ENCODE measurements at regions of chr7 and their contacts with region 1.

Region 1: DNA sequence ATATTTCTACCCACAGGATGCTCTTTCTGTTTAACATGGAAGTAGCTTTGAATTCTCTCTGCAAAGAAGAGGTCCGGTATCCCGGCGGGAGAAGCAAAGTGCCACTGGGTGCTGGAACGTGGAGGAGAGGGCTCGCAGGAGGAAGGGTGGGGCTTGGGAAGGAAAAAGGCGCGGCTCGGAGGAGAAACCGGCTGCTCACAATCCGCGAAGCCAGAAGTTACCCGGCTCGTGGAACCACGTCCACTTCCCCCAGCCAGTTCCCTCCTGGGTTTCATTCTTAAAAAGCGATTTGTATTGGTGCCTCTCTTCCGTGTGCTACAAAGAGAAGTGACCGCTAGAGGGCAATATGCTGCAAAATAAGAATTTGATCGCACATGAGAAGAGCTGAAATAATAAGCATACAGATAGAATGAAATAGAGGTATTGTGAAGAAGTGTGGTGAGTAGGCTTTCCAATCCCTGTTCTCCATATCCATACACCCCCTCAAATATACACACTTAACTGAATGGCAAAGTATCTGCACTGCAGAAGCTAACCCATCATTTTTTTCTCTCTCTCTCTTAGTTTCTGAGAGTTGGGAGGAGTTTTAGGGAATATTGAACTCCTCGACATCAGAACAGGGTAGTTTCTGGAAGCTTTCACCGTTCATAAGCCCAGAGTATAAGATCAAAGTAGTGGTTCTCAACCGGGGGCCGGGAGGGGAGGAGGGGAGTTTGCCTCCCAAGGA is 31.1 kb downstream of the TRIL start:
- DNase-seq: peak; percentile 73

Region 2: DNA sequence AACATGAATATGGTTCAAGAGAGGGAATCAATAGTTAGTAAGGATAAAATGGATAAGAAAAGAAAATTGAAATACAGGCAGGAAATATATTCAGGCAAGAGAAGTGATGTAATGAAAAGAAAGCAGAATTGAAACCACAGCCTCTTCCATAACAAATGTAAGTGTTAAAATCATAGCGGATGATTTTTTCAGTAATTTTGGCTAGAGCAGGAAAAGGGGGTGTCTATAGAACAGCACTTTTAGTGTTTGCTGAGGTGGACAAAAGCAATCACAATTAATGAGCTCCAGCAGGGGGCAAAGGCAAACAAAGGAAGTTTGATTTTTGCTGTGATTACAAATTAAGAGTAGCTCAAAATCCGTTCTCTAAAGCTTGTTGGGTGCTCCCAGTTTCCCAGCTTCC is 47.9 kb before region 1 on chr7:
- CTCF ChIA-PET with region 1: no interaction called
- POLR2A ChIA-PET with region 1: no interaction called
- DNase-seq: no peak

Region 3: DNA sequence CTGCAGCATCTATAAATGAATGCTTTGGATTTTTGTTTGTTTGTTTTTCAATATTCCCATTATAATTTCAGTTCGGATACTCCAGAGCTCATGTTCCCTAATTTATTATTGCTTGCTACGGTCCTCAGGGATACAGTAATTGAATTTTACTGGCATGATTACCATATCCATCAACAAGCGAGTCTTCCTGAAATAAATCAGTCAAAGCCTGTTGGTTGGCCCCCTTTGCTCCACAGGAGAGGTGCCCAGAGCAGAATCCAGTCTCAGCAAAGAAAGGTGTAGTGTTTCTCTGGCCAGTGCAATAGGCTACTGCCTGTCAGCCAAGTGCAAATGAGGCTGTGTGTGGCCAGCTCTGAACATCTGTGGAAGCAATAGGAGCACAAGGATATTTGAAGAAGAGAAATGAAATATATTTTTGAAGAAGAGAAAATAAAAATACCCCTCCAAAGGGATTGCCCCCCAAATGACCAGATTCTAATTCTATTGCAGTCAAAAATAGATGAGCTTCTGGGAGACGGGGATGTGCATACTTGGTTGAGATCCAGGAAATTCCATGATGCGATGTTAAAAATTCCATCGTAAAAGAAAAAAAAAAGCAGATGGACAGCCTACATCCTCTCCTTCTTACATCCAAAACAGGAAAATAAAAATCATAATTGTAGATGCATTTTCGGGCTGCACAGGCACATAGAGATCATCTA is 13.0 kb after region 1 on chr7:
- CTCF ChIA-PET with region 1: interaction called, 12 read pairs
- POLR2A ChIA-PET with region 1: interaction called, 3 read pairs
- DNase-seq: peak; percentile 62

Region 4: DNA sequence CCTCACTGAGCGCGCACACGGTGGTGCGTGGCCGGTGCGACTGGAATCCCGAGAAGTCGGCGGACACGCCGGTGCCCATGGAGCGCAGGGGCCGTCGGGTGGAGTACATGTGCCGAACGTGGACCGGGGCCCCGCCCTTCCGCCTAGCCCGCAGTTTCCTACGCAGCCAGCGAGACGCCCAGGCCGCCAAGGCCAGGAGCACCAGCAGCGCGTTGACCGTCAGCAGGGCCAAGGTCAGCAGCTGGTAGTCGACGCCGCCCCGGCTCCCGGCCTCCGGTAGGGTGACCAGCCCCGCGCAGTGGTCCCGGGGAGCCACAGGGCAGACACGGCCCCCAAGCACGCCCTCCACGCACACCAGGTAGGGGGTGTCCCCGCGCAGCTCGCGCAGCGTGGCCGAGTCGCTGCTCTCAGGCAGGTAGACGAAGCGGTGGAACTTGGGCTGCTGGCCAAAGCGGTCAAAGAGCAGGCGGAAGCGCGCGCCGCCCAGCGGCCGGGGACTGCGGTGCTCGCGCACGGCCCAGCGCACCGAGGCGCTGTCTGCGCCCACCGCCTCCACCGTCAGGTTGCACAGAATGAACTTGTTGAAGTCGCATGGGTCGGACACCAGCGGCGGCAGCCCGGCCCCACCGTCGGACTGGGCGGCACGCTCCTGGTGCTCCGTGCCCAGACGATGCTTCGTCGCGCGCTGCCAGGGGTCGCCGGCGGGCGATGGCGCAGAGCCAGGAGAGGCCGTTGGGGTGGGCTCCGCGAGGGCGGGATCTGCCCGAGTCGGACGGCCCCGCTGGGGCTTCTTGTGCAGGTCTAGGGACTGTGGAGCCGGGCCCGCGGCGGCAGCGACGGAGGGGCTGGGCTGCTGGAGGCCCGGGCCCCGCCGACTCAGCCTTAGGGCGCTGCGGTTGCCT is 28.9 kb after region 1 on chr7:
- CTCF ChIA-PET with region 1: interaction called, 40 read pairs
- POLR2A ChIA-PET with region 1: no interaction called
- DNase-seq: peak; percentile 89

Region 5: DNA sequence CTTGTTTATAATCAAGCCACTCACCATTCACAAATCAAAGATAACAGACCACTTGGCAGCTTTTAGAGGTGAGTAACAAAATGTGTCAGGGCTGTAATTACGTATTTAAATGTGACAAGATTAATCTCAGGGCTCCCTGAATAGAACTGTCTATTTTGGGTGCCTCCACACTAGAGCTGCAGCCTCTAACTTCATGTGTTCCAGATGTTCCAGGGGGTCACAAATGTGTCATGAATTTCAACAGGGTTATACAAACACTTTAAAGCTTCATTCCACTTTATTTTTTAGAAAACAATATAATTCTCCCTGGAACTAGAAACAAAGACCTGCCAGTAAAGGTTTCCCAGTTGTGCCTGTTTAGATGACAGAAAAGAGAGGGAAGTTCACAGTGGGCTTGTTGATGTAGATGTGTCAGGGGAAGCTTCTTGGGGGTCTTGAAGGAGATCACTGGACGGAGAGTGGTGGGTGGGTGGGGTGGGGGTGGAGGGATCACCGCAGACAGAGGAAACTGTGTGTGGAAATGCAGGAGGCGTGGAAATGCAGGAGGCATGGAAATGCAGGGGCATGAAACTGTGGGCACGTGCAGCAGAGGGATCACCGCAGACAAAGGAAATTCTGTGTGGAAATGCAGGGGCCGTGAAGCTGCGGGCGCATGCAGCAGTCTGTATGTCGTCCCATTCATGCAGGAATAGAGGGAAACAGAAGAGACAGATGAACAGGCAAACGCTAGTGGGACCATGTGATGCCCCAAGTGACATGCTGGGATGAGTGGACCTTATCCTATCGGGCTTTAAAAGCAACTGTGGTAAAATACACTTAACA is 73.1 kb after region 1 on chr7:
- CTCF ChIA-PET with region 1: no interaction called
- POLR2A ChIA-PET with region 1: no interaction called
- DNase-seq: no peak

Region 6: GRCh38 chr7:29105752-29106668 is 179.0 kb after region 1 on chr7:
- CTCF ChIA-PET with region 1: interaction called, 27 read pairs
- POLR2A ChIA-PET with region 1: interaction called, 6 read pairs
- DNase-seq: peak; percentile 37

Measured in HEK293T (cell line).